Ascending aorta (tissue), 2 donors: ENCODE measurements at regions of chr13 and their contacts with region 1.

Region 1: DNA sequence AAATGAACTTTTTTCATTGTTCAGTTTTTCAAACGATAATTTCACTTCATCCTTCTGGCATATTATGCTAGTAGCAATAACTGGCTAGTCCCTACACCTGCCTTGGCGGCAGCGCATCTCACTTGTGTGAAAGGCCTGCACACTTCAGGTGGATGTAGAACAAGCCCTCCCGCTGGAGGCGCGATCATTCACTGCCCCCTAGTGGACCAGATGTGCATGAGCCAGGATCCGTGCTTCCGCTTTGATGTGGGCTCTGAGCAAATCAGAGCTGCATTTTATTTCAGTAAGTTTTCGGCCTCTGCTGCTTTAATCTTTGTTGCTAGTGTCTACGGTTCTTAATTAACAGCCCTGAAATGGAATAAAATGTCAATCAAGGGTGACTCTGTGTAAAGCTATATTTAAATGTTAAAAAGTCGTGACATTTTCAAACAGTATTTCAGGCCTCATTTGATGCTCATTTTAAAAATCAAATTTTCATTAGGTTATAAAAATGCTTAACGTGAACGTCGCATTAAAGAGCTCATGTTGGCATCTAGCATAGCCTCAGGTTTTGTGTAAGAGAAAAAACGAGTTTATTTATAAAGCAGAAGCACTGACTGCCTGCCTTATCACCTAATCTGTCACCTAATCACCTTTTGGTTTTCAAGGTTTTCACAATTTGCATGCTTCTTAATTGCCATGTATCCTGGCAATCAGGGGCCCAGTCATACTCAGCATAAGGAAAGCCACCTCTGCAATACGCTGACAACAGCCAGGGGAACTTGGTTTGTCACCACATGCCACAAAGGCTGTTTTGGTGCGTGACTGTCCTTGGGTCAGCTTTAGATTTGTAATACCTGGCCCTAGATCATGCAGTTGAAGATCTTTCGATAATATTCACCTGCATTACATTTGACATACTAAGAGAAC is 112.2 kb downstream of the TEX26 start:
- DNase-seq: peak; percentile 28 to 88
- H3K4me3 ChIP-seq: no peak overlapping the region
- H3K27ac ChIP-seq: peak overlapping the region in 1 of 2 donors; percentile 23
- H3K4me1 ChIP-seq: peaks cover 0 to 2% of the 10 kb centered on the region in 2 donors
- H3K27me3 ChIP-seq: no peaks in the 10 kb centered on the region
- CTCF ChIP-seq: peak; percentile 68 to 96 (median 89)

Region 2: GRCh38 chr13:30132623-30133553 is 911.7 kb before region 1 on chr13:
- intact Hi-C with region 1: loop called (anchors 2 kb)
- DNase-seq: peak; percentile 87 to 98
- H3K4me3 ChIP-seq: peak overlapping the region in 1 of 2 donors; percentile 10
- H3K27ac ChIP-seq: no peak overlapping the region
- H3K4me1 ChIP-seq: no peaks in the 10 kb centered on the region
- H3K27me3 ChIP-seq: no peaks in the 10 kb centered on the region
- CTCF ChIP-seq: peak; percentile 83 to 95 (median 84)

Region 3: DNA sequence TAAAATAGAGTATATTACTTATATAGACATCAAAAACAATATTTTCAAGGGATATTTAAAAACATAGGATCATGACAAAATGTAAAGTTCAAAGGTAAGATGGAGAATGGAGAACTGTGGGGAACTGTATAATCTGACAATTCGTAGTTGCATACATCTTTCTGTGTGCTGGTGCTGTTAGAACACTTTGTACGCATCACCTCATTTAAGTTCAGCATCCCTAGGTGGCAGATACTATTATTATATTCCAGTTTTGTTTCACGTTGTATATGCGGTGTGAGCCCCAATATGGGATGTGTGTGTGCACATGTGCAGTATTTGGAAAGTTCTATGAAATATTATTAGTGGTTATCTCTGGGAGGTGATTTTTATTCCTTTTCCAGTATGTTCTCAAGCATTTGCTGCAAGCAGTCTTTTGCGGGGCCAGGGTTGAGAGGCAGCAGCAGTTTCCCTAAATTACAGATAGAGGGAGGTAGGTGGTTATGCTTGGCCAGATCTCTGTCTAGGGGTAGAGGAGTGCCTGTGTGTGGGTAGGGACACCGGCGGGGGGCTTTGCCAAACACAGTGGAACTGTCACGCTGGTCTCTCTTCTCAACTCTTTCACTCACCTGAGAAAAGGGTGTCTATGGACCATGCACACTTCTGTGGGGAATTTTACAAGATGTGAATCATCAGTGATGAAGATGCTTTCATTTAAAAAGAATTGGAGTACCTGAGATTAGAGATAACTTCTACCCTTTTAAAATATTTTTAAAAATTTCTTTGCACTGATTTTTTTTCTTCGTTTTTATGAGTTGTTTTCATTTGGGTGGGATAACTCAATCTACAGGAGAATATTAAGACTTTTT is 364.9 kb before region 1 on chr13:
- intact Hi-C with region 1: loop called (anchors 1 kb)
- DNase-seq: no peak
- H3K4me3 ChIP-seq: no peak overlapping the region
- H3K27ac ChIP-seq: no peak overlapping the region
- H3K4me1 ChIP-seq: no peaks in the 10 kb centered on the region
- H3K27me3 ChIP-seq: no peaks in the 10 kb centered on the region
- CTCF ChIP-seq: peak; percentile 49 to 64 (median 53)

Region 4: GRCh38 chr13:30847650-30848307 is 196.9 kb before region 1 on chr13:
- intact Hi-C with region 1: loop called (anchors 5 kb)
- DNase-seq: peak; percentile 48 to 90
- H3K4me3 ChIP-seq: peak overlapping the region in 1 of 2 donors; percentile 1
- H3K27ac ChIP-seq: peak overlapping the region; percentile 74 to 87
- H3K4me1 ChIP-seq: peaks cover 0 to 7% of the 10 kb centered on the region in 2 donors
- H3K27me3 ChIP-seq: no peaks in the 10 kb centered on the region
- CTCF ChIP-seq: no peak

Region 5: DNA sequence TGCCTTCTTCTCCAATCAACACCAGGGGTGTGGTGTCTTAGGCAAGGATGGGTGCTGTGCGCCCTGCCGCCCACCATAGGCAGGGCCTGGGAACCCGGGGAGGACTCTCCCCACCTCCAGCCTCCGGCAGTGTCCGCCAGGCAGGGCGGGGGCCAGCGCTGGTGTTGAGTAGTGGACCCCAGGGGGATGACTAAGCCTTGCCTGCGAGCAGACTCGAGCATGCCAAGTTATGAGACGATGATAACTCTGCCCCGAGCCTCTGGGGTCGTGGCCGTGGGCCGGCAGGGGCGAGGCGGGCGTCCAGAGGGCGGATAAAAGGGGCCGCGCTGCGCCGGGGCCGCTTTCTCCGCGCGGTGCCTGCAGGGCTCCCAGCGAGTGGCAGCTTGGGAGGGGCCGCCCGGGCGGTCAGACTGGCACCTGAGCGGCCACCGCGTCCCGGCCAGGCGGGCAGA is 138.7 kb before region 1 on chr13 and contains the start of gene MEDAG:
- intact Hi-C with region 1: loop called (anchors 2 kb)
- DNase-seq: peak; percentile 76 to 96
- H3K4me3 ChIP-seq: peak within 1 kb of the TSS; percentile 56 to 81
- H3K27ac ChIP-seq: peak within 1 kb of the TSS; percentile 95 to 98
- H3K4me1 ChIP-seq: peaks cover 0 to 21% of the 10 kb centered on the region in 2 donors
- H3K27me3 ChIP-seq: no peaks in the 10 kb centered on the region
- CTCF ChIP-seq: no peak
- total RNA-seq, gene MEDAG: 98.8 TPM

Region 6: DNA sequence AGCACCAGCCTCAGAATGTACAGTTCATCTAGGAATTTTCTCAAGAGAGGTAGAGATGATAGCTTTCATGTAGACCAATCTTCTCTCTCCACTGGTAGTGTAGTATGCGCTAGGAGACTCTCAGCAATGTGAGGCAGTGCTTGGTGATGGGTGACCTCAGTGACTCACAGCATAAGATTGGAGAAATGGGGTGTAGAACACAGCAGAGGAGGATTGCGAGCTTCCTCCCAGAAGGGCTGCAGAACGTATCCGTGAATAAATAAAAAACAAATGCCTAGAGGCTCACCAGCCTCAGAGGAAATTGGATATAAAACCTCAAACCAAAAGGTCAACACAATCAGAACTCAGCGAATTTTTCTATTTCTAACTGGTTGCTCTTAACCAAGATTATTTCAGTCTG is 511.7 kb after region 1 on chr13:
- intact Hi-C with region 1: no loop called
- DNase-seq: no peak
- H3K4me3 ChIP-seq: no peak overlapping the region
- H3K27ac ChIP-seq: no peak overlapping the region
- H3K4me1 ChIP-seq: no peaks in the 10 kb centered on the region
- H3K27me3 ChIP-seq: no peaks in the 10 kb centered on the region
- CTCF ChIP-seq: no peak